HEK293 (cell line): ENCODE measurements at regions of chr15 and their contacts with region 1.

Region 1: DNA sequence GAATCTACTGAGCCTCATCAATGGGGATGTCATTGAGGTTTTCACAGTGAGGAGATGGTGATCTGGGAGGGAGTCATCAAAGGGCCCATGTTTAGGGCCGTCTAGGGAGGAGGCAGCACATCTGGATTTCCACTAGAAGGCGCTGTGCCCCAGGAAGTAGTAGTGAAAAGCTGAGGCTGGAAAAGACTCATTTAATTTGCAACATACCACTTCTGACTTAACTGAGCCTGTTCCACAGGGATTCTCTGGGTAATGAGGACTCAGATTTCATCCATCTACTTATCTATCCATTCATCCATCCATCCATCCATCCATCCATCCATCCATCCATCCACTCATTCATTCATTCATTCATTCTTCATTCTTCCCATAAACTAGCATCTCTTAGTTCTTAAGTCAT is 17.4 kb upstream of the SHF start:
- H3K4me3 ChIP-seq: no peak overlapping the region
- H3K27ac ChIP-seq: no peak overlapping the region
- H3K4me1 ChIP-seq: no peaks in the 10 kb centered on the region
- CTCF ChIP-seq: no peak

Region 2: DNA sequence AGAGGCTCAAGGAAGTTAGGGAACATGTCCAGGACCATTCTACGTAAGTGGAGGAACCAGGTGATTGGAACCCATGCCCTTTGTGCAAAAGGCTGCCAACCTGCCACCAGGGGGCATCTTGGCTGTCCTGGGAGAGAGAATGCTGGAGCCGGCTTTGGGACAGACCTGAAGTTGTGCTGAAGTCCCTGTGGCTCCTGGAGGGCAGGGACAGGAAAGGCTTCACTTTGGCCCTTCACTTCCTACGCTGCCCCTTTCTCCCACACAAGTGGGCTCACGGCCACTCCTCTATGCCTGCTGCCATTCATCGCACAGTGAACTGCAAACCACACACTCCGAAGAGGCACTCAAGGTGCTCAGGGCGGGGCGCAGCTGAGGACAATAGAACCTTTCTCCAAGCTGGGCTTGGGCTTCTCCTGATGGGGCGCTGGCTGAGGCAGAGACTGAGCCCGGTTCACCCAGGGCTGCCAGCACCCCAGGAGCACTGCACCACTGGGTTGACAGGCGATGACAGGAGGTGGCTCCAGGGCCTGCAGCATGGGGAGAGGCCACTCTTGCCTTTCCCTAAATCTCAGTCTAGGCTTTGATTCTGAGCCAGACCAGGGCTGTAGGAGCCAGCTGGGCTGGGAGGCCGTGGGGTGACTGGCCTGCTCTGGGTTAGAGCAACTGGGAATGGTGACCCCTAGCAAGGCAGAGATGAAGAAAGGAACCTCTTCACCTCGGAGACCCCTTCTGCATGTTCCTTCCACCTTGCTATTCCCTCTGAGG is 25.8 kb before region 1 on chr15:
- CTCF ChIA-PET with region 1: interaction called, 15 read pairs
- POLR2A ChIA-PET with region 1: no interaction called
- H3K4me3 ChIP-seq: no peak overlapping the region
- H3K27ac ChIP-seq: no peak overlapping the region
- H3K4me1 ChIP-seq: no peaks in the 10 kb centered on the region; the same call in 1 of the 2 replicates
- CTCF ChIP-seq: no peak; the same call in 1 of the 2 replicates

Region 3: DNA sequence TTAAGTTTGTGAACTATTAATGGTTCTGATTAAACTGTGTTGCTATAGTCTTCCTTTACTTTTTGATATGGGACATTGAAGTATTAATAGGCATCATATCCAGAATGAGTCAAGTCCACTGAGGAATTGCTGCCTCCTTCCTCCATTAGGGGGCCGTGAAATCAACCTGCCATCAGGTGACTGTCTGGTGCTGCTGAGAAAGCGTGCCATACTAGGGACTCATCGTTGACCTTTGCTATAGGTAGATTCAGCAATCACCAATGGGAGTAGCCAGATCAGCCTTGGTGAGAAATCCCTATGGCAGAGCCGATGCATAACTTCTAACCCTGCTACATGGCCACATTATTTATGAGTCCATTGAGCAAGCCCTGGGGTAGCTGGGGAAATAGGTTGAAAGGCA is 16.8 kb after region 1 on chr15:
- CTCF ChIA-PET with region 1: interaction called, 33 read pairs
- POLR2A ChIA-PET with region 1: no interaction called
- H3K4me3 ChIP-seq: no peak overlapping the region
- H3K27ac ChIP-seq: no peak overlapping the region
- H3K4me1 ChIP-seq: no peaks in the 10 kb centered on the region
- CTCF ChIP-seq: no peak

Region 4: GRCh38 chr15:45265506-45265905 is 60.3 kb after region 1 on chr15:
- CTCF ChIA-PET with region 1: interaction called, 10 read pairs
- POLR2A ChIA-PET with region 1: no interaction called
- H3K4me3 ChIP-seq: no peak overlapping the region
- H3K27ac ChIP-seq: no peak overlapping the region
- H3K4me1 ChIP-seq: no peaks in the 10 kb centered on the region
- CTCF ChIP-seq: no peak

Region 5: DNA sequence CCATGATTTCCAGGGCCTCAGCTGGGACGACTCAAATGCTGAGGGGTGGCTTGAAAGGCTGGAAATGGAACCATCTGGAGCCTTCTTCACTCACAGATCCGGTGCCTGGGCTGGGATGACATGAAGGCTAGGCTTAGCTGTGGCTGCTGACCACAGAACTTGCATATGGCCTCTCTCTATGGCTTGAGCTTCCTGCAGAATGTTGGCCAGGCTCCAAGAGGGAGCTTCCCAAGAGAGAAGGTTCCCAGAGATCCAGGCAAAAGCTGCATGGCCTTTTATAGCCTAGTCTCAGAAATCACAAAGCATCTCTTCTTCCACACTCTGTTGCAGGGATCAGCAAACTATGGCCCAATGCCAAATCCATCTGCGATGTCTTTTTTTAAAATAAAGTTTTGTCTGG is 128.4 kb after region 1 on chr15:
- CTCF ChIA-PET with region 1: no interaction called
- POLR2A ChIA-PET with region 1: no interaction called
- H3K4me3 ChIP-seq: no peak overlapping the region
- H3K27ac ChIP-seq: no peak overlapping the region
- H3K4me1 ChIP-seq: no peaks in the 10 kb centered on the region
- CTCF ChIP-seq: no peak

Region 6: DNA sequence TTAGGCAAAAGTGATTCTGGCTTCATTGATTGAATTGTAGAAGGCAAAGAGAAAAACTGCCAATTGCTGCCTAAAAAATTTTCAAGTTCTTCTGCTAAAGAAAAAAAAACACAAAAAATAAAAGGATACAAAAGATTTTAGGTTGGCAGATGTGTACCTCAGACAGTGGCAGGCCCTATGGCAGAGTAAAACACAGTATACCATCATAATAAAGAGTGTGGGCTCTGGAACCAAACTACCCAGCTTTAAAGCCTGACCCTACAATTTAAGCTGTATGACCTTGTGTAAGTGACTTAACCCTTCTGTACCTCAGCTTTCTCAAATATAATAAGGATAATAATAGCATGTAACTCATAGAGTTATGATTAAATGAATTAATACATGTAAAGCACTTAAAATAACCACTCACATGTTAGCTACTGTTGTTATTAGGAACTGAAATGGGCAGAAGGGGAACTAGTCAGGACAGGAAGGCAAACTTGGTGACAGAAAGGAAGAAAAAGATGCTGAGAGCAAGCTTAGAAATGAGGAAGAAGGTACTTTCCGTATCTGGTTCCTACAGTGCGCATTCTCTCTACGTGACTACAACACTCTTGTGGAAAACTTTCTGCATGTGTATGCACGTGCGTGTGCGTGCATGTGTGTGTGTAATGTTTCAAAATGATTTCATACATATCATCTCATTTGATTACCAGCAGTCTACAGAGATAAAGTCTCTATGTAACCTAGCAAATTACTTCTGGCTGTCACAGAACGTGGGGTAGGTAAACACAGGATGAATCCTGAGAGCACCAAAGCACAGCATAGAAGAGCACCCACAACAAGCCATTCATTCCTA is 186.8 kb after region 1 on chr15:
- CTCF ChIA-PET with region 1: interaction called, 13 read pairs
- POLR2A ChIA-PET with region 1: no interaction called
- H3K4me3 ChIP-seq: no peak overlapping the region
- H3K27ac ChIP-seq: no peak overlapping the region
- H3K4me1 ChIP-seq: peaks cover 7% of the 10 kb centered on the region
- CTCF ChIP-seq: no peak

Region 7: DNA sequence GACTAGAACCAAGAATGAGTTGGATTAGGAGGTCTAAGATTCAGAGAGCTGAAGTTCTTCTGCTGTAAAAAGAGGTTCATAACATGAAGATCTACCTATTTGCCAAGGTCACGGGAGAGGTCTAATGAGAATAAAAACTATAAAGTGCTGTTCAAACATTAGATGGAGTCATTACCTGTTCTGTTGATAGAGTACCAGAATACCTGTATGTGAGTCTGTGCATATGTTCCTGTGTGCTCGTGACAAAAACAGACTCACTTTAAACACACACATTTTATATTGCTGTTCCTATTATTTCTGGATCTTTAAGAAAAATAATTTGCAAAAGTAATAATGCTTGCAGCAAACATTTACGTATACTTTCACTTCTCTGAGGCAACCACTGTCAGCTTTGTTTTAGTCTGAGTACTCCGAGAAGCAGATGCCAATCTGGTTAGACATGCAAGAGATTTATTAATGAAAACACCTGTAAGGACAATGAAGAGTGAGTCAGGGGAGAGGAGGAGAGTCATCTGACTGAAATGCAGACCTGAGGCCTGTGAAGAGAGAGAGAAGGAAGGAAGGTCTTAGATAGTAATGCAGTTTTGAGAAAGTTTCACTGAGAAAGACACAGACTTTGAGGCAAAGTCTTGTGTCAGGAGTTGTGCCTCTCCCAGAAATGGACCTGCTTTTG is 650.9 kb after region 1 on chr15:
- CTCF ChIA-PET with region 1: no interaction called
- POLR2A ChIA-PET with region 1: no interaction called
- H3K4me3 ChIP-seq: no peak overlapping the region
- H3K27ac ChIP-seq: no peak overlapping the region
- H3K4me1 ChIP-seq: no peaks in the 10 kb centered on the region
- CTCF ChIP-seq: no peak